ENCODE measurements at regions of chr14 and their contacts with region 1.

Region 1: DNA sequence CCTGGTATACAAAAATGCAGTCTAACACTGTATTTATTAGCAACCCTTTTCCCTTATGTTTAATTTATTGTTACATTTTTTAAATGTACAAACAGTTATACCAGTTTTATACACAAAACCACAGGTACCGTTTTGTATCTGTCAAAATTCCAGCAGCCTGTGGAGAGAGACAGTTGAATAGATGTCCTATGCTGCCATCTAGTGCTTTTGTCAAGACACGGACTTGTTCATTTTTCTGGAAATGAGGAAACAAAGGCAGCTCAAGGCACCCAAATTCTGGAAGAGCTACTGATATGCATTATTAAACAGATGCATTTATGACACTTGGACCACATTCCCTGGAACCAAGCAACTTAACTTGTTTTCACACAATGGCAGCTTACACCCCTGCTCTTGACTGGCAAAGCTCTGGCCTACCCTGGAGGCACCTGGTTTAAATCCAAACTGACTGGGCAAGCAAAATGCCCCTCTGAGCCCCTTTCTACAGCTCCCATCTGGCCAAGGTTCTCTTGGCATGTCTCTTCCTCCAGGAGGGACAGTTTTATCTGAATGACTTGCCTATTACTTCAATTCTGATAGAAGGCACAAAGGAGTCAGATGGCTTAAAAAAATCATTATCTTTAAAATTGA is 286.9 kb upstream of the PRKD1 start:
- DNase-seq: no peak
- H3K4me3 ChIP-seq: no peak overlapping the region
- H3K27me3 ChIP-seq: no peaks in the 10 kb centered on the region
- CTCF ChIP-seq: peak; percentile 64

Region 2: DNA sequence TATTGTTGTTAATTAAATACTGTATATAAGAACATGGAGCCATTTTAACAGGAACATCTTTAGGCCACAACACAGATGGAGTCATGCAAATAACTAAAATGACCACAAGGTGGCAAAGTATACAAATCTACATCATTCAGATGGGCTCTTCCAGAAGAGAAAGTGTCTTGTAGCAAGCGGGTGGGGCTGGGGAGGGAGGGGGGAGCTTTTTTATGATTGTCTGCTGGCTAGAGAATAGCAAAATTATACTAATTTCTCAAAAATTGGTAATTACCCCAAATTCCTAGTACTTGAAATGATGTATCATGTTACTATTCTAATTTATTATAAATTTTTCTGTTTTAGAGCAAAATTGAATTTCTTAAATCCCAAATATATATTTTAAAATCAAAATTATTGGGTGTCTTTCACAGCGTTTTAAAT is 665.6 kb before region 1 on chr14:
- CTCF ChIA-PET with region 1: interaction called, 86 read pairs
- POLR2A ChIA-PET with region 1: no interaction called
- DNase-seq: no peak
- H3K4me3 ChIP-seq: no peak overlapping the region
- H3K27me3 ChIP-seq: 0 out of 2 replicates have a peak, but pooled peaks cover 1% of the 10 kb centered on the region
- CTCF ChIP-seq: peak; percentile 60

Region 3: DNA sequence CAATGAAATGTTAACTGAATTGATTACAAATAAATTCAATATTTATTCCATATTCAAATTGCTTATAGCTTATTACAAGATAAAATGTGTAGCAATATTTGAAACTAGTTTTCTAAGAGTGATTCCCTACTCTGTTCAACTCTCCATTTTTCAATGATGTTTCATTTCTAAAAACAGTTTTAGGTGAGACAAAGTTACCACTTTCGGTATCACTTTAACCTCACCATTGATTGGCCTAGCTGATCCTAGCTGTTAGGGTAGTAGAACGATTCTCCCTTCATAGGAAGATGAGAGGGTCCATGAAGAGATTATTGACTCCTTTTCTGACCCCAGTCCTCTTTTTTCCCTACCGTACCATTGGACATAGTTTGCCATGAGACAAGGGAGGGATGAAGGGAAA is 660.2 kb before region 1 on chr14:
- CTCF ChIA-PET with region 1: interaction called, 86 read pairs
- POLR2A ChIA-PET with region 1: no interaction called
- DNase-seq: no peak
- H3K4me3 ChIP-seq: no peak overlapping the region
- H3K27me3 ChIP-seq: no peaks in the 10 kb centered on the region
- CTCF ChIP-seq: no peak

Region 4: DNA sequence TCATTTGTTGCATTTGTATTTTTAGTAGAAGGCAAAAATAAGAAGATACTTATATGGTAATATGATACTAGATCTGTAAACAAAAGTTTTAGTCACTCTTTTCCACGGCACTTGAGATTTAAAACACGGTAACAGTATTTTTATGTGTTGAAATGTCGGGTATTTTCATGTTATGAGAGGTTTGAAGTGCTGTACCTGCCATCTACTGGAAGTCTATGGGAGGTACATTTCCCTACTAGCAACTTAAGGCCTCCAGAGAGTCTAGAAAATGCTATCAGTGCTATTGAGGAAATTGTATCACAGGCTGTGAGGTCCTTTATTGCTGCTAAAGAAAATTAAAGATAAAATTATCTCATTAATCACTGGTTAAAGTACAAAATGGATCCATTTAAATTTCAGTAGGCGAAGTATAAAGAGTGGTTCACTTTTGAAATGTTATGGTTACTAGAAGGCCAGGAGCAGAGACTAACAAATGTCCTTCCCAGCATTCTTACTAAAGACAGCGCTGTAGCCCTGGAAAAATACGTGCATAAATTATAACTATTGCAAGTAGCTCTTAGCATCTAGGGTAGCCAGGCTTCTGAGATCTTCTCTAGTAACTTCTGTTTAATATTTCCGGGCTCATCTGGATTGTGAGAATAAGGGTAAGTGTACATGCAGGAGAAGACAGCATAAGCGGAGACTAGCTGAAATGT is 209.3 kb before region 1 on chr14:
- CTCF ChIA-PET with region 1: interaction called, 15 read pairs
- POLR2A ChIA-PET with region 1: no interaction called
- DNase-seq: peak; percentile 23
- H3K4me3 ChIP-seq: no peak overlapping the region
- H3K27me3 ChIP-seq: no peaks in the 10 kb centered on the region
- CTCF ChIP-seq: peak; percentile 73

Region 5: DNA sequence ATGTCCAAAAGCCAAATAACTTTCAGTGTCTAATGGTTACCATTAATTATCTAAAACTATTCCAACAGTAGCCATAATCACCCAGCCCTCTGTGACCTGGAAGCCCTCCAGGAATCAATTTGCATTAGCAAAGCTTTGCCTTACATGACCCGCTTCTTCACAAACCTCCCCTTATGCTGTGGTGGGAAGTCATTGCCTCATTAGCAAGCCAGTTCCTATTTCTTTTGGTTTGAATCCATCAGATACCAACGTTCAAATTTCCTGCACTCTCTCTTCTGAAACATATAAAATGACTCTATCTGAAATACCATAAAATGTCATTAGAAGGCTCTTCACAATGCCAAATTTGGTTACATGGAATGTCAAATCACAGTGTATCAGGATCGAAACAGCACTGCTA is 18.6 kb before region 1 on chr14:
- CTCF ChIA-PET with region 1: interaction called, 12 read pairs
- POLR2A ChIA-PET with region 1: interaction called, 4 read pairs
- DNase-seq: no peak
- H3K4me3 ChIP-seq: no peak overlapping the region
- H3K27me3 ChIP-seq: no peaks in the 10 kb centered on the region
- CTCF ChIP-seq: no peak

Region 6: GRCh38 chr14:30204431-30204980 is 10.1 kb before region 1 on chr14:
- CTCF ChIA-PET with region 1: interaction called, 10 read pairs
- POLR2A ChIA-PET with region 1: no interaction called
- DNase-seq: no peak
- H3K4me3 ChIP-seq: no peak overlapping the region
- H3K27me3 ChIP-seq: no peaks in the 10 kb centered on the region
- CTCF ChIP-seq: no peak